ENCODE measurements at regions of chr4 and their contacts with region 1.

Region 1: GRCh38 chr4:40238700-40239548 is 42.1 kb downstream of the RHOH start:
- DNase-seq: no peak
- ATAC-seq: peak; percentile 50
- H3K4me3 ChIP-seq: no peak overlapping the region
- H3K27ac ChIP-seq: no peak overlapping the region
- H3K4me1 ChIP-seq: peaks cover 5% of the 10 kb centered on the region; the same call in 1 of the 2 replicates
- H3K27me3 ChIP-seq: no peaks in the 10 kb centered on the region
- CTCF ChIP-seq: no peak
- EP300 ChIP-seq: no peak
- POLR2A ChIP-seq: 0 out of 2 replicates have a peak, but pooled peaks have one; percentile 31
- RAD21 ChIP-seq: no peak

Region 2: GRCh38 chr4:39792529-39792928 is 446.4 kb before region 1 on chr4:
- CTCF ChIA-PET with region 1: no interaction called
- POLR2A ChIA-PET with region 1: no interaction called
- RAD21 ChIA-PET with region 1: no interaction called
- SMC1A ChIA-PET with region 1: no interaction called
- in situ Hi-C with region 1: no loop called
- intact Hi-C with region 1: no loop called
- DNase-seq: no peak
- ATAC-seq: peak; percentile 31
- H3K4me3 ChIP-seq: no peak overlapping the region
- H3K27ac ChIP-seq: no peak overlapping the region
- H3K4me1 ChIP-seq: peaks cover 7% of the 10 kb centered on the region
- H3K27me3 ChIP-seq: no peaks in the 10 kb centered on the region
- CTCF ChIP-seq: no peak
- EP300 ChIP-seq: no peak
- POLR2A ChIP-seq: no peak
- RAD21 ChIP-seq: no peak

Region 3: GRCh38 chr4:40140196-40140595 is 98.7 kb before region 1 on chr4:
- CTCF ChIA-PET with region 1: no interaction called
- POLR2A ChIA-PET with region 1: no interaction called
- RAD21 ChIA-PET with region 1: no interaction called
- SMC1A ChIA-PET with region 1: no interaction called
- in situ Hi-C with region 1: no loop called
- intact Hi-C with region 1: no loop called
- DNase-seq: no peak
- ATAC-seq: no peak
- H3K4me3 ChIP-seq: no peak overlapping the region
- H3K27ac ChIP-seq: no peak overlapping the region
- H3K4me1 ChIP-seq: no peaks in the 10 kb centered on the region
- H3K27me3 ChIP-seq: no peaks in the 10 kb centered on the region
- CTCF ChIP-seq: no peak
- EP300 ChIP-seq: no peak
- POLR2A ChIP-seq: no peak
- RAD21 ChIP-seq: no peak

Region 4: DNA sequence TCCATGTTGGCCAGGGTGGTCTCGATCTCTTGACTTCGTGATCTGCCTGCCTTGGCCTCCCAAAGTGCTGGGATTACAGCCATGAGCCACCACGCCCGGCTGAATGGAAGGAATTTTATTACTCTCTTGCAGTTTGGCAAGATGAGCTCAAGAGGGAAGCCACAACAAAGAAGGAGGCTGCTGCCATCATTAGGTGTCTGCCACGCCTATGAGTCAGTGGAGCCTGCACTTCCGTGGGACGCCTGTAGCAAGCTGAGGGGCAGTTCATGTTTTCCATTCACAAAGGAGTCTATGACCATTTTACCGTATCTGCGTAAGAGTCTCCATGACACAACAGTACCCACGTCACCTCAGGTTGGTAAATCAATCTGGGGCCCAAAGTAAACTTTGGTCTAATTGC is 45.0 kb after region 1 on chr4:
- CTCF ChIA-PET with region 1: no interaction called
- POLR2A ChIA-PET with region 1: interaction called, 11 read pairs
- RAD21 ChIA-PET with region 1: interaction called, 3 read pairs
- SMC1A ChIA-PET with region 1: no interaction called
- in situ Hi-C with region 1: no loop called
- intact Hi-C with region 1: no loop called
- DNase-seq: no peak
- ATAC-seq: peak; percentile 91
- H3K4me3 ChIP-seq: no peak overlapping the region
- H3K27ac ChIP-seq: no peak overlapping the region
- H3K4me1 ChIP-seq: no peaks in the 10 kb centered on the region; the same call in 1 of the 2 replicates
- H3K27me3 ChIP-seq: no peaks in the 10 kb centered on the region
- CTCF ChIP-seq: peak in 1 of 3 experiments; percentile 30; a peak in 2 of 6 replicates
- EP300 ChIP-seq: no peak
- POLR2A ChIP-seq: no peak
- RAD21 ChIP-seq: no peak